Aorta (tissue), 5 donors: ENCODE measurements at regions of chr6 and their contacts with region 1.

Region 1: GRCh38 chr6:11434565-11435326 is 102.8 kb upstream of the TMEM170B start:
- DNase-seq: no peak
- ATAC-seq: no peak
- H3K4me3 ChIP-seq: no peak overlapping the region
- H3K27ac ChIP-seq: peak overlapping the region; percentile 88 to 89
- H3K4me1 ChIP-seq: peaks cover 5 to 16% of the 10 kb centered on the region in 2 donors
- H3K27me3 ChIP-seq: no peaks in the 10 kb centered on the region

Region 2: GRCh38 chr6:11241793-11242201 is 192.9 kb before region 1 on chr6:
- intact Hi-C with region 1: loop called in 1 of 2 experiments (anchors 5 kb)
- DNase-seq: peak; percentile 87 to 94
- ATAC-seq: peak; percentile 94
- H3K4me3 ChIP-seq: no peak overlapping the region
- H3K27ac ChIP-seq: peak overlapping the region in 1 of 2 donors; percentile 87
- H3K4me1 ChIP-seq: peaks cover 2 to 8% of the 10 kb centered on the region in 2 donors
- H3K27me3 ChIP-seq: no peaks in the 10 kb centered on the region

Region 3: DNA sequence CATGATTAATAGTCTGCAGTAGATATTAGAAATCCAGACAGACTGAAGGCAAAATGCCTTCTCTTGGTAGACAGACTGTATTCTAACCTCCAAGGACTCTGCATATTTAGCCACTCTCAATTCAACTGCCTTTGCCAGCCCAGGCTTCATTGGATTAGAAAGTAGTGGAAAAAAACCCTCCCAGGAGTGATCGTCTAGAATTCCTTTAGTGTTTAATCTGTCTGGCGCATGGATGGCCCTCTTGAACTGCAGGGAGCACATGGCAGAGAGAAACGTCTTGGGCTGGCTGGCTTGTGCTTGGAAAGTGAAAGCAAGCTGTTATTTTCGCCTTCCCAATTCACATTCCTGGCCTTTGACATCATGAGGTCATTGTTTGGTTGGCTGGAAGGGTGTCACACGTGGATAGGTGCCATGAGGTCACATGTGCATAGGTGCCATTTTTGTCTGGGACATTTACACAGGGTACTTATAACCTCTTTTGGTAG is 171.4 kb before region 1 on chr6:
- intact Hi-C with region 1: loop called in 1 of 2 experiments (anchors 5 kb)
- DNase-seq: peak; percentile 81 to 82
- ATAC-seq: peak; percentile 91
- H3K4me3 ChIP-seq: no peak overlapping the region
- H3K27ac ChIP-seq: peak overlapping the region in 1 of 2 donors; percentile 58
- H3K4me1 ChIP-seq: peaks cover 0 to 4% of the 10 kb centered on the region in 2 donors
- H3K27me3 ChIP-seq: no peaks in the 10 kb centered on the region

Region 4: GRCh38 chr6:11414176-11414963 is 20.4 kb before region 1 on chr6:
- intact Hi-C with region 1: loop called in 1 of 2 experiments (anchors 1 kb)
- DNase-seq: no peak
- ATAC-seq: no peak
- H3K4me3 ChIP-seq: no peak overlapping the region
- H3K27ac ChIP-seq: peak overlapping the region; percentile 12 to 63
- H3K4me1 ChIP-seq: peaks cover 3 to 4% of the 10 kb centered on the region in 2 donors
- H3K27me3 ChIP-seq: no peaks in the 10 kb centered on the region